Left ventricle myocardium inferior (tissue), 1 donor: ENCODE measurements at regions of chr1 and their contacts with region 1.

Region 1: DNA sequence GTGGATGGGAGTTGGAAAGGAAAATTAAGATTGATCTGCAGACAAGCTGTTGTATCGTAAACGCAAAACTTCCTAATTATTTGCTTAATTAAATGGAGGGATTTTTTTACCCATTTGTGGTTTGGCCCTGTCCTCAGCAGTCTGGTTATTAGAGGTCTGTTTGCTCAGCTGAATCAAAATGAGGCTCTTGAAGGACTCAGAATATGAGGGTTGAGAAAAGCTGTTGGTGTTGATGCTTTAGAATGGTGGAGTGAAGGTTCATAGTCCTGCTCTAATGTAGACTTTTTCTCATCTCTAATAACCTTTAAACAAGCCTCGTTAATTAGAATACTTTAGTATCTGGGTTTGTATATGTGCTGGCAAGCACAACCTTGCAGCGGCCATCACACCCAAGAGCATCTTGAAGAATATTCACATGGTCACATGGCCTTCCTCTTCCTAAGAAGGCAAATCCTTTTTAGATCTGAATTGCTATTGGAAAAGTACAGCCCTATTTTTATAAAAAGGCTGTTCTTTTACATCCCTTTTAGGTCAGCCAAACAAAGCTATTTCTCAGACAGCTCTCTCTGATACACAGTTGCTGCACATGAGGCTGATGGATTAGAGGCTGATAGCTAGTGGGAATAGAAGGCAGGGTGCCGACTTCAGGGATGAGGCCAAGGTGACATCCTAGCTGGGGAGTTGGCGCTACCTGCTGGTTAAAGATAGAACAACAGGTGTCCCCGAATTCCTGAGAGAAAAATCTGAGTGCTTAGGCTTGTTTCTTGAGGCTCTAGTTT is 53.8 kb downstream of the MACF1 start:
- DNase-seq: peak; percentile 51
- H3K4me3 ChIP-seq: no peak overlapping the region
- H3K27ac ChIP-seq: peak overlapping the region; percentile 55
- H3K4me1 ChIP-seq: peaks cover 50% of the 10 kb centered on the region
- H3K27me3 ChIP-seq: no peaks in the 10 kb centered on the region
- CTCF ChIP-seq: peak; percentile 93

Region 2: DNA sequence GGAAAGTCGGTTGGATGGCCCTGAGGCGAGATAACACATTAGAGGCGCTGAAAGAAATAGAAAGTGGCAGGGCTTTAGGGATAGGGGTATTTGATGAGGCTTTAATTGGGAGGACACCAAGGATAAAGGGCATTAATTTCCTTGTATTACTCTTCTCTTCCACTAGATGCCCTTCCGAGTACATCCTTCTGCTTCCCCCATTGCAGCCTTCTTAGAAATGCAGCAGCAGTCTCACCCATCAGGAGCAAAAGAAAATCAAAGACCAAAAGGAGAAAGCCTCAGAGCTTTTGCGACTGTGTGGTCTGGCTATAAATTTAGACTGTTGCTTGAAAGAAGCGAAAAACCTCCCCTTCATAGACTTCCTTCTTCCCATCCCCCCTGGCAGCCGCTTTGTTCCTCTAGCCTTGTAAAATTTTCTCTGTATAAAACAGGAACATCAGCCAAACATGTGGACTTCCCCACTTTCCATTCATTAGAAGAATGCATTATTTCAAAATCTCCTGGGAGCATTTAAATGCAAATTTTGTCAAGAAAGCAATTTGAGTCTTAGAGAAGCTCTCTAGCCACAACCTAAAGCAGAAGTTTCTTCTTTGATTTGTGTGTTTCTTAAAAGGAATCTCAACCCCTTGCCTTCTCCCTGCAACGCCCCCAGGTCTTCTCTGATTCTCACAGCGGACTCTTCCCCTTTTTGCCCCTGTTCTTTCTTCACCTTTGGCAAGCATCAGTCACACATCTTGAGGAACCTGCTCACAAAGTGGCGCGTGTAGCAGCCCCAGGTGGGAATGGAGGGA is 155.6 kb before region 1 on chr1:
- intact Hi-C with region 1: loop called (anchors 2 kb)
- DNase-seq: no peak
- H3K4me3 ChIP-seq: no peak overlapping the region
- H3K27ac ChIP-seq: peak overlapping the region; percentile 39
- H3K4me1 ChIP-seq: peaks cover 56% of the 10 kb centered on the region
- H3K27me3 ChIP-seq: no peaks in the 10 kb centered on the region
- CTCF ChIP-seq: peak; percentile 80

Region 3: GRCh38 chr1:39142401-39143151 is 115.8 kb before region 1 on chr1:
- intact Hi-C with region 1: no loop called
- DNase-seq: no peak
- H3K4me3 ChIP-seq: no peak overlapping the region
- H3K27ac ChIP-seq: peak overlapping the region; percentile 13
- H3K4me1 ChIP-seq: peaks cover 34% of the 10 kb centered on the region
- H3K27me3 ChIP-seq: no peaks in the 10 kb centered on the region
- CTCF ChIP-seq: no peak

Region 4: GRCh38 chr1:39189592-39190041 is 68.7 kb before region 1 on chr1:
- intact Hi-C with region 1: loop called (anchors 5 kb)
- DNase-seq: no peak
- H3K4me3 ChIP-seq: no peak overlapping the region
- H3K27ac ChIP-seq: no peak overlapping the region
- H3K4me1 ChIP-seq: peaks cover 54% of the 10 kb centered on the region
- H3K27me3 ChIP-seq: no peaks in the 10 kb centered on the region
- CTCF ChIP-seq: no peak